HEK293 (cell line): ENCODE measurements at regions of chr1 and their contacts with region 1.

Region 1: GRCh38 chr1:101309334-101310311 is 72.8 kb downstream of the S1PR1 start:
- H3K4me3 ChIP-seq: no peak overlapping the region
- H3K27ac ChIP-seq: no peak overlapping the region
- H3K4me1 ChIP-seq: no peaks in the 10 kb centered on the region
- CTCF ChIP-seq: peak; percentile 31

Region 2: GRCh38 chr1:101267082-101267481 is 42.5 kb before region 1 on chr1:
- CTCF ChIA-PET with region 1: no interaction called
- POLR2A ChIA-PET with region 1: no interaction called
- H3K4me3 ChIP-seq: no peak overlapping the region
- H3K27ac ChIP-seq: no peak overlapping the region
- H3K4me1 ChIP-seq: 0 out of 2 replicates have a peak, but pooled peaks cover 5% of the 10 kb centered on the region
- CTCF ChIP-seq: no peak

Region 3: DNA sequence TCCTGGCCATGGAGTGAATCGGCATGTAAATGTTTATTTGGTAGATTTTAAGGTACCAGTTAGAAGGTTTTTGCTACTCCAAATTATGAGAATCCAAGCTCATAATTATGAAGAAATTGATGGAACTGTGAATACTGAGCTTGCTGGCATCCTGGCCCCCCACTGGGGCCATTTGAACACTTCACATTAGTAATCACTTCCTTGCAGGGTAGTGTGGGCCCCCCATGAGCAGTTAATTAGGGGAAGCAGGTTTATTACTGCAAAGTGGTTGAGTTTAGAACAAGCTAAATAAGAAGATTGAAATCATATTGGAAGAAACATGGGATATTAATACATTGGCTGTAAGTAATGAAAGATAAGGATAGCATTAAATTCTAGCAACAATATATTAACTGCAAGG is 13.9 kb after region 1 on chr1:
- CTCF ChIA-PET with region 1: interaction called, 17 read pairs
- POLR2A ChIA-PET with region 1: no interaction called
- H3K4me3 ChIP-seq: no peak overlapping the region
- H3K27ac ChIP-seq: no peak overlapping the region
- H3K4me1 ChIP-seq: no peaks in the 10 kb centered on the region
- CTCF ChIP-seq: no peak

Region 4: DNA sequence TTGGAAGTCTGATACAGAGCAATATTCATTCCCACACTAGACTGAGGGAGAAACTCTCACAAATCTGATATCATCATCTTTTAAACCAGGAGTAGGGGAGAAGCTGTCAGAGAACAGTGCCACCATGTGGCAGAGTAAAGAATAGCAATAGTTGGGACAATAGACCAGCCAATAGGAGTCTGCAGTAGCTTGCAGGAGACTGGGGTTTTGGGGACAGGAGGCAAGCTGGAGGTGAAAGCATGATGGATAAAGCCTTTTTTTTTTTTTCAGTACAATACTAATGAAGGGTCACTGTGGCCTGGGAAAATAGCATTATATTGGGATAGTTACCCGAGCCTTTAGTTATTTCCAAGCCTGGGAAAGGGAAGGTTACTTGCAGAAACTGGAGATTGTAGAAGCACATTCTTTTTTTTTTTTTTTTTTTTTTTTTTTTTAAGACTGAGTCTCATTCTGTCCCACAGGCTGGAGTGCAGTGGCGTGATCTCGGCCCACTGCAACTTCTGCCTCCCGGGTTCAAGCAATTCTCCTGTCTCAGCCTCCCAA is 47.9 kb after region 1 on chr1:
- CTCF ChIA-PET with region 1: interaction called, 41 read pairs
- POLR2A ChIA-PET with region 1: interaction called, 3 read pairs
- H3K4me3 ChIP-seq: no peak overlapping the region
- H3K27ac ChIP-seq: no peak overlapping the region
- H3K4me1 ChIP-seq: no peaks in the 10 kb centered on the region
- CTCF ChIP-seq: peak; percentile 69

Region 5: DNA sequence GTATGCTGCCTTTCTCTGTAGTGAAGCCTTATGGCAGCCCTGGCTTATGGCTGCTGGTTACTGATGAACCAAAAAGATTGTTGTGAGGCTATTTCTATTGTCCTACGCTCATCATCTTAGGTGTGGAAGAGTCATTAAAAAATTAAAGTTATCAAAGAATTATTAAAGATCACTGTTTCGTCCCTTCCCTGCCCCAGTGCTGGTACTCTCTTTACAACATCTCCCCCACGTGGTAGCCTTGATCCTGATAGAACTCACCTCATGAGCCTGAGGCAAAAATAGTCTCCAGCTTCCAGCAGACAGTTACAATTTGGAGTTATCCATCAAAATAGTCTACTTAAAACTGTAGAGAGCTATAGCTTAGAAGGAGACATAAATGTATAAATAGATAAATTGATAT is 128.7 kb after region 1 on chr1:
- CTCF ChIA-PET with region 1: interaction called, 35 read pairs
- POLR2A ChIA-PET with region 1: no interaction called
- H3K4me3 ChIP-seq: no peak overlapping the region
- H3K27ac ChIP-seq: no peak overlapping the region
- H3K4me1 ChIP-seq: no peaks in the 10 kb centered on the region
- CTCF ChIP-seq: peak; percentile 42; the same call in 1 of the 2 replicates